CD8-positive, alpha-beta T cell (primary cell): ENCODE measurements at regions of chr6 and their contacts with region 1.

Region 1: DNA sequence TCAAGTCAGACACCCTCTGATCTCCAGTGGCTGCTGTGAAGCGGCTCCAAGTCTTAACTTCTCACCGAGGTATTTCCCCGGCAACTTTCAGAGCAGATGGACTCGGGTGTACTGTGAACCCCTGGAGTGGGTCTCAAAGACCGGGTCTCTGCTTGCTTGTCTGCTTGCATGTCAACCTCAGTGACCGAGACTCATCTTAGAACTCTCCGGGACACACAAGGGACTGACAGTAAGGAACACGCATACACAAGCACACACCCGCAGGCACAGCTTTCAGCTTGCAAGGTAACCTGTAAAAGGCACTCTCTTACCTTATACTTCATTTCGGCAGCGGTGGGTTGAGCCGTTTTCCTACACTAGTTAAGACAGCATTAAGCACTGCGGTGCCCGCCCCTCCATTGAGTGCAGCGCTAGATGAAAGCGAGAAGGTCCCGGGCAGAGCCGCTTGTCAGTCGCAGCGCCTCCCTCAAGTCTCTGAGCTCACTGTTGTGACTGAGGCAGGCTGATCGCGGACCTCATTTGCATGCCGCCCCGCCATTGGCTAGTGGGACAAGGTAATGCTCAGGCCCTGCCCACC is at the start of gene NEDD9:
- DNase-seq: peak; percentile 87 to 97 (median 91)
- ATAC-seq: peak; percentile 94
- H3K4me3 ChIP-seq: peak within 1 kb of the TSS; percentile 62 to 70
- H3K4me3 Mint-ChIP-seq: peak within 1 kb of the TSS; percentile 94
- H3K27ac ChIP-seq: peak within 1 kb of the TSS; percentile 76 to 96
- H3K27ac Mint-ChIP-seq: peak within 1 kb of the TSS; percentile 99
- H3K4me1 ChIP-seq: peaks cover 25% of the 10 kb centered on the region
- H3K4me1 Mint-ChIP-seq: peaks cover 61% of the 10 kb centered on the region
- H3K27me3 ChIP-seq: no peaks in the 10 kb centered on the region
- H3K27me3 Mint-ChIP-seq: no peaks in the 10 kb centered on the region
- CTCF ChIP-seq: no peak
- total RNA-seq, gene NEDD9: 41.2 to 44.2 TPM

Region 2: GRCh38 chr6:11146117-11146826 is 86.0 kb before region 1 on chr6:
- CTCF ChIA-PET with region 1: no interaction called
- POLR2A ChIA-PET with region 1: no interaction called
- intact Hi-C with region 1: no loop called
- DNase-seq: no peak
- ATAC-seq: no peak
- H3K4me3 ChIP-seq: no peak overlapping the region
- H3K4me3 Mint-ChIP-seq: no peak overlapping the region
- H3K27ac ChIP-seq: no peak overlapping the region
- H3K27ac Mint-ChIP-seq: no peak overlapping the region
- H3K4me1 ChIP-seq: no peaks in the 10 kb centered on the region
- H3K4me1 Mint-ChIP-seq: no peaks in the 10 kb centered on the region
- H3K27me3 ChIP-seq: no peaks in the 10 kb centered on the region
- H3K27me3 Mint-ChIP-seq: no peaks in the 10 kb centered on the region
- CTCF ChIP-seq: no peak

Region 3: GRCh38 chr6:11172501-11173332 is 59.6 kb before region 1 on chr6:
- CTCF ChIA-PET with region 1: interaction called, 6 read pairs
- POLR2A ChIA-PET with region 1: no interaction called
- intact Hi-C with region 1: loop called in 1 of 2 experiments (anchors 5 kb)
- DNase-seq: peak; percentile 58 to 90 (median 77)
- ATAC-seq: peak; percentile 79
- H3K4me3 ChIP-seq: peak overlapping the region in 1 of 2 experiments; percentile 23
- H3K4me3 Mint-ChIP-seq: peak overlapping the region; percentile 44
- H3K27ac ChIP-seq: no peak overlapping the region
- H3K27ac Mint-ChIP-seq: peak overlapping the region; percentile 62
- H3K4me1 ChIP-seq: peaks cover 9% of the 10 kb centered on the region
- H3K4me1 Mint-ChIP-seq: peaks cover 11% of the 10 kb centered on the region
- H3K27me3 ChIP-seq: no peaks in the 10 kb centered on the region
- H3K27me3 Mint-ChIP-seq: no peaks in the 10 kb centered on the region
- CTCF ChIP-seq: peak; percentile 86

Region 4: DNA sequence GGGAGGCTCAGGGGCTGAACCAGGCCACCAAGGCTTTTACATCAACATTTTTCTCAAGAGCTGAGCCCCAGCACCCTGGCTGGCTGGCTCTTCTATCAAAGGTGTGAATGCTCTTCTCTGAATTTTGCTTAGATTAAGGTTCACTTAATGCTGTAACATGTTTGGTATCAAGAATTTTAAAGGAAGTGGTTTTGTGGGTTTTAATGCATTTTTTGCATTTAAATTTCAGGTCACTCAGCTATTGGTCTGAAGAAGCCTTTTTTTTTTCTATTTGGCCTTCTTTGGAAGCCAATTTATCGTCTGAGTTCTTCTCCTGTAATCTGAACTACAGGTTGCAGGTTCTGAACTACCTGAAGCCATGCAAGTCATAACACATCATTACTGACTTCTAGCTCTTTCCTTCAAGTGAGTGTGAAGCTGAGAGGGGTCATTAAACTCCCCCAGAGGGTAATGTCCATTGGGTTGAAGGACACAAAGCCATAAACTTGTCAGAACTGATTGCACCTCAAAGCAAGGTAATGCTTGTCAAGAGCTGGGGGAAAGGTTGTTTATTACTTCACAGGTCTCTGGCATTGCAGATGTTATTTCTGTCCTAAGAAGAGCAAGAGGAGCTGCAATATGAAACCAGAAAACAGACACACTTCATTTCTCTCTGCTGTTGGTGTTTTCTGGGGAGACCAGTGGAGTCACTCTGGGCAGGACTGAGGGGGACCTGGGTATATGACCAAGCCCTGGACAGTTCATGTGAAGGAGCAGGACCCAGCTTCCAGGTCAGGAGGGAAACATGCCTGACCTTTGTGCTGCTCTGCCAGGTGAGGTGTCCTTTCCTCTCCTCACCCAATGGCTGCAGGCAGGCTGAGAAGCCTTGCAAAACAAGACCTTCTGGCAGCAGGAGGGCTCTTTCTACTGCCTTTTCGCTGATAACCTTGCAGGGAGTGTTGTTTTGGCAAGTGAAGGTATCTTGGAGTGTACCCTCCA is 26.3 kb after region 1 on chr6:
- CTCF ChIA-PET with region 1: no interaction called
- POLR2A ChIA-PET with region 1: interaction called, 3 read pairs
- intact Hi-C with region 1: loop called in 1 of 2 experiments (anchors 1 kb)
- DNase-seq: peak in 4 of 9 experiments; percentile 14 to 80 (median 57)
- ATAC-seq: peak; percentile 80
- H3K4me3 ChIP-seq: no peak overlapping the region
- H3K4me3 Mint-ChIP-seq: peak overlapping the region; percentile 29
- H3K27ac ChIP-seq: peak overlapping the region in 1 of 2 experiments; percentile 73
- H3K27ac Mint-ChIP-seq: peak overlapping the region; percentile 84
- H3K4me1 ChIP-seq: peaks cover 32% of the 10 kb centered on the region
- H3K4me1 Mint-ChIP-seq: peaks cover 67% of the 10 kb centered on the region
- H3K27me3 ChIP-seq: no peaks in the 10 kb centered on the region
- H3K27me3 Mint-ChIP-seq: no peaks in the 10 kb centered on the region
- CTCF ChIP-seq: no peak

Region 5: GRCh38 chr6:11374036-11375010 is 142.0 kb after region 1 on chr6:
- CTCF ChIA-PET with region 1: no interaction called
- POLR2A ChIA-PET with region 1: interaction called, 3 read pairs
- intact Hi-C with region 1: loop called in 1 of 2 experiments (anchors 5 kb)
- DNase-seq: peak in 1 of 9 experiments; percentile 32
- ATAC-seq: peak; percentile 11
- H3K4me3 ChIP-seq: no peak overlapping the region
- H3K4me3 Mint-ChIP-seq: no peak overlapping the region
- H3K27ac ChIP-seq: no peak overlapping the region
- H3K27ac Mint-ChIP-seq: peak overlapping the region; percentile 25
- H3K4me1 ChIP-seq: no peaks in the 10 kb centered on the region
- H3K4me1 Mint-ChIP-seq: peaks cover 65% of the 10 kb centered on the region
- H3K27me3 ChIP-seq: no peaks in the 10 kb centered on the region
- H3K27me3 Mint-ChIP-seq: no peaks in the 10 kb centered on the region
- CTCF ChIP-seq: no peak

Region 6: GRCh38 chr6:11537229-11538051 is 305.2 kb after region 1 on chr6 and contains the start of gene TMEM170B:
- CTCF ChIA-PET with region 1: no interaction called
- POLR2A ChIA-PET with region 1: no interaction called
- intact Hi-C with region 1: loop called (anchors 1 to 2 kb)
- DNase-seq: peak; percentile 94 to 99 (median 97)
- ATAC-seq: peak; percentile 93
- H3K4me3 ChIP-seq: peak within 1 kb of the TSS; percentile 71 to 85
- H3K4me3 Mint-ChIP-seq: peak within 1 kb of the TSS; percentile 85
- H3K27ac ChIP-seq: peak within 1 kb of the TSS; percentile 36 to 60
- H3K27ac Mint-ChIP-seq: peak within 1 kb of the TSS; percentile 74
- H3K4me1 ChIP-seq: peaks cover 10% of the 10 kb centered on the region
- H3K4me1 Mint-ChIP-seq: peaks cover 18% of the 10 kb centered on the region
- H3K27me3 ChIP-seq: no peaks in the 10 kb centered on the region
- H3K27me3 Mint-ChIP-seq: peaks cover 7% of the 10 kb centered on the region
- CTCF ChIP-seq: no peak
- total RNA-seq, gene TMEM170B: 2.2 TPM

Region 7: GRCh38 chr6:11575408-11576033 is 343.2 kb after region 1 on chr6:
- CTCF ChIA-PET with region 1: no interaction called
- POLR2A ChIA-PET with region 1: no interaction called
- intact Hi-C with region 1: no loop called
- DNase-seq: peak in 8 of 9 experiments; percentile 5 to 67 (median 42)
- ATAC-seq: peak; percentile 88
- H3K4me3 ChIP-seq: no peak overlapping the region
- H3K4me3 Mint-ChIP-seq: no peak overlapping the region
- H3K27ac ChIP-seq: no peak overlapping the region
- H3K27ac Mint-ChIP-seq: no peak overlapping the region
- H3K4me1 ChIP-seq: no peaks in the 10 kb centered on the region
- H3K4me1 Mint-ChIP-seq: no peaks in the 10 kb centered on the region
- H3K27me3 ChIP-seq: no peaks in the 10 kb centered on the region
- H3K27me3 Mint-ChIP-seq: no peaks in the 10 kb centered on the region
- CTCF ChIP-seq: peak; percentile 85